ENCODE measurements at regions of chr14 and their contacts with region 1.

Region 1: GRCh38 chr14:49862089-49862673 is 9.6 kb upstream of the NEMF start:
- DNase-seq: peak; percentile 93
- H3K4me3 Mint-ChIP-seq: no peak overlapping the region
- H3K27ac Mint-ChIP-seq: no peak overlapping the region
- H3K4me1 Mint-ChIP-seq: peaks cover 24% of the 10 kb centered on the region
- H3K27me3 Mint-ChIP-seq: peaks cover 2% of the 10 kb centered on the region

Region 2: GRCh38 chr14:49633640-49634546 is 228.3 kb before region 1 on chr14:
- CTCF ChIA-PET with region 1: interaction called, 11 read pairs
- POLR2A ChIA-PET with region 1: interaction called, 8 read pairs
- intact Hi-C with region 1: loop called (anchors 1 kb)
- DNase-seq: peak; percentile 97
- H3K4me3 Mint-ChIP-seq: peak overlapping the region; percentile 91
- H3K27ac Mint-ChIP-seq: peak overlapping the region; percentile 95
- H3K4me1 Mint-ChIP-seq: peaks cover 42% of the 10 kb centered on the region
- H3K27me3 Mint-ChIP-seq: no peaks in the 10 kb centered on the region

Region 3: DNA sequence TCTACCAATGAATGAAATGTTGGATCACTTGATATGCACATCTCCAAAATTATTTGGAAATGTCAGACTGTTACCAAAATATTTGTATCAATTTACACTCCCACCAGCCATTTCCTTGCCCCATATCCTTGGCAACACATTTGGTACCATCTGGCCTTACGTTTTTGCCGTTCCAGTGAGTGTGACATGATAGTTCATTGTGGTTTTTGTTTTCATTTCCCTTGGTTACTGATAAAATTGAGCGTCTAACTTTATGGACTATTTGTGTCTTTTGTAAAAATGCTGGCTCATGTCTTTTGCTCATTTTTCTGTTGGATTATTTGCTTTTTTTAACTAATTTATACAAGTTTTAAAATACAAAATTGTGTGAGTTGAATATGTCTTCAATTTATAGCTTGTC is 158.2 kb before region 1 on chr14:
- CTCF ChIA-PET with region 1: no interaction called
- POLR2A ChIA-PET with region 1: no interaction called
- intact Hi-C with region 1: no loop called
- DNase-seq: no peak
- H3K4me3 Mint-ChIP-seq: no peak overlapping the region
- H3K27ac Mint-ChIP-seq: no peak overlapping the region
- H3K4me1 Mint-ChIP-seq: no peaks in the 10 kb centered on the region
- H3K27me3 Mint-ChIP-seq: no peaks in the 10 kb centered on the region

Region 4: GRCh38 chr14:49820176-49820575 is 42.0 kb before region 1 on chr14:
- CTCF ChIA-PET with region 1: no interaction called
- POLR2A ChIA-PET with region 1: no interaction called
- intact Hi-C with region 1: no loop called
- DNase-seq: no peak
- H3K4me3 Mint-ChIP-seq: no peak overlapping the region
- H3K27ac Mint-ChIP-seq: no peak overlapping the region
- H3K4me1 Mint-ChIP-seq: no peaks in the 10 kb centered on the region
- H3K27me3 Mint-ChIP-seq: no peaks in the 10 kb centered on the region

Region 5: GRCh38 chr14:49892636-49893308 is 30.6 kb after region 1 on chr14 and contains the start of gene ARF6:
- CTCF ChIA-PET with region 1: interaction called, 14 read pairs
- POLR2A ChIA-PET with region 1: interaction called, 55 read pairs
- intact Hi-C with region 1: loop called (anchors 1 kb)
- DNase-seq: peak; percentile 98
- H3K4me3 Mint-ChIP-seq: peak within 1 kb of the TSS; percentile 90
- H3K27ac Mint-ChIP-seq: peak within 1 kb of the TSS; percentile 93
- H3K4me1 Mint-ChIP-seq: peaks cover 18% of the 10 kb centered on the region
- H3K27me3 Mint-ChIP-seq: no peaks in the 10 kb centered on the region
- total RNA-seq, gene ARF6: 198 to 202 TPM

Region 6: GRCh38 chr14:49982501-49982951 is 120.3 kb after region 1 on chr14:
- CTCF ChIA-PET with region 1: interaction called, 4 read pairs
- POLR2A ChIA-PET with region 1: interaction called, 13 read pairs
- intact Hi-C with region 1: no loop called
- DNase-seq: peak; percentile 44
- H3K4me3 Mint-ChIP-seq: peak overlapping the region; percentile 54
- H3K27ac Mint-ChIP-seq: peak overlapping the region; percentile 82
- H3K4me1 Mint-ChIP-seq: peaks cover 81% of the 10 kb centered on the region
- H3K27me3 Mint-ChIP-seq: no peaks in the 10 kb centered on the region

Region 7: GRCh38 chr14:50085570-50086320 is 223.6 kb after region 1 on chr14:
- CTCF ChIA-PET with region 1: interaction called, 31 read pairs
- POLR2A ChIA-PET with region 1: interaction called, 14 read pairs
- intact Hi-C with region 1: loop called (anchors 1 kb)
- DNase-seq: peak; percentile 70
- H3K4me3 Mint-ChIP-seq: peak overlapping the region; percentile 30
- H3K27ac Mint-ChIP-seq: peak overlapping the region; percentile 91
- H3K4me1 Mint-ChIP-seq: peaks cover 92% of the 10 kb centered on the region
- H3K27me3 Mint-ChIP-seq: no peaks in the 10 kb centered on the region

Region 8: DNA sequence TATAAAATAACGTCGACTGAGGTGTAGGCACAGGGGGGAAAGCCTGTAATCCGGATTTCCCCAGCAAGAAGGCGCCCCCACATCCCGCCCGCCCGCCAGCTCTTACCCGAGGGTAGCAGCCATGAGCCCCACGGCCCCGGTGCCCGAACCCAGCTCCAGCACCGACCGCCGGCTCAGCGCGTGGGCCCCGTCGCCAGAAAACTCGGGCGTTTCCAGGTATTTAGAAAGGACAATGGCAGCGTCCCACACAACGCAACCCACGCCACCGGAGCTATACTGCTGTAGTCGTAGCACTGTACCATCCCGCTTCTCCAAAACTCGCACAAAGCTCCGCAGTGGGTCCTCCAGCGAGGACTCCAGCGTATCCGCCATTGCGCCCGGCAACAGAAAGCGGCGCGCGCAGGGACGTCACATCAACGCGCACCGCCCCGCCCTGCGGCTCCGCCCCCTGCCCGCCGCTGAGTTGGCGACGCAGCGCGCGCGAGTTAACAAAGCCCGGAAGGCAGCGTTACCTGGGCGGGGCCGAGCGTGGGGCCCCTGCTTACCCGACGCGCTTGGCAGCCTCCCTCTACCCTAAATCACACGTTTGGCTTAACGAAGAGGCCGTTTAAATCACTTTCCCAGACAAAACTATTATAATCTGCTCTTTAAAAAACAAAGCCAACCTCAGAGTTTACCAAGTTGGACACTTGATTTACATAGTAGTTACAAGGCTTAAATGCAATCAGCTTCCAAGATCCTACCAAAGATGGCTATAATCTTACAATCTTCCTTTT is 254.2 kb after region 1 on chr14 and contains the start of gene VCPKMT:
- CTCF ChIA-PET with region 1: interaction called, 37 read pairs
- POLR2A ChIA-PET with region 1: interaction called, 7 read pairs
- intact Hi-C with region 1: loop called (anchors 1 kb)
- DNase-seq: peak; percentile 96
- H3K4me3 Mint-ChIP-seq: peak within 1 kb of the TSS; percentile 98
- H3K27ac Mint-ChIP-seq: peak within 1 kb of the TSS; percentile 95
- H3K4me1 Mint-ChIP-seq: peaks cover 37% of the 10 kb centered on the region
- H3K27me3 Mint-ChIP-seq: no peaks in the 10 kb centered on the region
- total RNA-seq, gene VCPKMT: 7.7 to 10.1 TPM